Activated CD4-positive, alpha-beta T cell treated with anti-CD3 and anti-CD28 coated beads, Interleukin-2, amount 10 ng/mL, durations not matched to agents 7 days and 5 days (primary cell): ENCODE measurements at regions of chr13 and their contacts with region 1.

Region 1: DNA sequence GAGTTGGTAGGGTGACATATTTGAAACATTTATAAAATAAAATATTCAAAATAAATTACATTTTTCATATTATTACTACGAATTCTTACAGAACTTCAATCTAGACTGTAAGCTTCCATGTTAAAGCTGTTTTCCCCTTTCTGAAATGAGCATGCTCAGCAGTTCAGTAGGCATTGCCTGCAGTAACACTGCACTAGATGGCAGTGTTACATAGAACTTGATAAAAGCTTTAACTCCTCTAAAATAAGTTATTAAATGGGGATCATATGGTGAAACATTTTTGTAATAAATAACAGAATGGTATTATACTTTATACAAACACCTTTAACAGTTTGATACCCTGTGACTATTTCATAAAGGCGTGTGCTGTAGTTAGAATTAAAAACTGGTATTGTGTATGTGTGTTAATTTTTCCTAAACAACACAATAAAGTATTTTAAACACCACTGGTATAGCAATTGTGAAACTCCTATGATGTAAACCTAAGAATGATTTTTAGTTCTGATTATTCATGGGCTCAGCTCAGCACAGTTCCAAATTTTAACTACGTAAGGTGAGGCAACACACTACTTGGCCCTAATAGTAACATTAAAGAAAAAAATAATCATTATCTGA is 11.6 kb upstream of the GPR18 start:
- DNase-seq: peak; percentile 58
- H3K4me3 Mint-ChIP-seq: no peak overlapping the region
- H3K27ac Mint-ChIP-seq: peak overlapping the region; percentile 46
- H3K4me1 Mint-ChIP-seq: peaks cover 67% of the 10 kb centered on the region
- H3K27me3 Mint-ChIP-seq: no peaks in the 10 kb centered on the region

Region 2: DNA sequence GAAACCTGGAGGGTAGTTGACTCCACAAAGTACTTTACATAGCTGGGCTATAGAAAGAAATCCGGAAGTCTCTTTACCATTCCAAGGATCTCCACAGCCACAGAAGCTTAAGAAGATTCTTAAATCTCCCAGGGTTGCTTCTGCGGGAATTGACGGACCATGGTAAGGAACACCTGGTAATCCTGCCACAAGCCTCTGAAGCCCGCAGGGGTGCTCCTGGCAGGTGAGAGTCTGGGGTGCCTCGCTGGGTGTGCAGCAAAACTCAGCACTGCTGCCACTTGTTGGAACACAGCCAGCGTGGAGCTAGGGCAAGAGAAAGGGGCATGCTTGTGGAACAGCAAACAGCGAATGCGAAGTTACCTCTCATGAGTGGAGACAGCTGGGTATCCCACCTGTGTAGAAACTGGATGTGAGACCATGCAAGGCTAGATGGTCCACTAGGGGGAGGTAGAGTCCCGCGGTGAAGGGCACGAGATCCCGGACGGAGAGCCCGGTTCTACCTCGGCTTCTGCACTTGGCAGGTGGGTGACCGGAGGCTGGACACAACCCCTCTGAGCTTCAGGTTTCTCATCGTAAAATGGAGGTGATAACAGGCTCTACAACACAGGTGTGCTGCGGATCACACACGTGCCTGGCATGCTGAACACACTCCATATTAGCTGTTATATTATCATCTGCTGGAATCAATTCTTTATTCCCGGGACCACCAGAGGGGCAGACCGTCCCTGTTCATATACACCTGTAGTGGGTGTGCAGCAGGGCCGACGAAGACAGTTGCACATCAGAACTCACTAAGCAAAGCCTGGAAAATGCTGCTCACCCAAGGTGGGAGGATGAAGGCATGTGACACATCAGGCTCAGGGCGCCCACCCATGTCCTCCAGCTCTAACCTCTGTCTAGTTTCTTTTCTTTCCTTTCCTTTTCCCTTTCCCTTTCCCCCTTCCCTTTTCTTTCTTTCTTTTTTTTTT is 93.1 kb before region 1 on chr13:
- CTCF ChIA-PET with region 1: interaction called, 41 read pairs
- POLR2A ChIA-PET with region 1: no interaction called
- DNase-seq: peak; percentile 82
- H3K4me3 Mint-ChIP-seq: no peak overlapping the region
- H3K27ac Mint-ChIP-seq: no peak overlapping the region
- H3K4me1 Mint-ChIP-seq: peaks cover 40% of the 10 kb centered on the region
- H3K27me3 Mint-ChIP-seq: peaks cover 2% of the 10 kb centered on the region

Region 3: DNA sequence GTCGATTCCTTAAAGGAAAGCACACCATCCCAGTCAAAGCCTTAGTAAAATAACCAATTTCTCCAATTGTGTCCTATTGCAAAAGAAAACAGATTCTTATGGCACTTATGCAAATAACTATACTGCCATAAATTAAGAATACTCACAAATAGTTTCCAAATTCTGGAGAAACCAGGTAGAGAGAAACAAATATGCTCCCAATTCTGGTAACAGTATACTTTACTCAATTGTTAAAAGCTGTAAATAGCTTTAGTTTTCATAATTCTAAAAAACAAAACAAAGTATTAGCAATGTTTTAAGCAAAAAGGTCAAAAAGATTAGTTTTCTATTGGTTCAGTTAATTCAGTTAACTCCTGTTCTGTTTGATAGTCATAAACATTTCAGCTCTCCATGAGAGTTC is 87.3 kb before region 1 on chr13:
- CTCF ChIA-PET with region 1: interaction called, 41 read pairs
- POLR2A ChIA-PET with region 1: no interaction called
- DNase-seq: no peak
- H3K4me3 Mint-ChIP-seq: no peak overlapping the region
- H3K27ac Mint-ChIP-seq: no peak overlapping the region
- H3K4me1 Mint-ChIP-seq: peaks cover 29% of the 10 kb centered on the region
- H3K27me3 Mint-ChIP-seq: no peaks in the 10 kb centered on the region

Region 4: DNA sequence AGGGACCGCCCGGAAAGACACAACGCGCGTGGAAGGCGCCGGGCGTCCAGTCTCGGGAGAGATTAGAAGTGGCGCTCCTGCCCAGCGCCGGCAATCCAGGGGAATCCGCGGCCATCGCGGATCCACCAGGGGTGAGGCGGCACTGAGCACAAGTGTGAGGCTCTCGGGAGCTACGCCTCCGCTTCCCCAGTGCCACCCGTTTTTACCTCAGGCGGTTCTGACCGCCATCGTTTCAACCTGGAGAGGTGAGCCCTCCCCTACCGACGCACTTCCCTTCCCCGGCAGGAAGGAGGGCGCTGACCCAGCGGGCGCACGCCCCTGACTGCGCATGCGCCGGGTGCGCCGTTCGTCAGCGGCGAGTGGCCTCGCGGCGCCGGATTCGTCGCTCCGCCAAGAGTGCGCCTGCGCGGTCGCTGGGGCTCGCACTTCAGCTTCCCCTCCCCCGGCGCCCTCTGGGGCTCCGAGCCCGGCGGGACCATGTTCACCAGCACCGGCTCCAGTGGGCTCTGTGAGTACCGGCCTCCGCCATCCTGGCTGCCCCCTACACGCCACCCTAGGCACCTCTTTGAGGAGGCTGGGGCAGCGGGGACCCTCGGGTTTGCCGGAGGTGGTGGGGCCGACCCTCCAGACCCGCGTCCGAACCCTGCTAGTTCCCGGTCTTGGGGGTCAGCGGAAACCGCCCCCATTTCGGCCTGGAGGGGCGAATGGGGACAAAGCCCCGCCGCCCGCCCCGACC is 69.1 kb before region 1 on chr13 and contains the start of gene UBAC2:
- CTCF ChIA-PET with region 1: interaction called, 10 read pairs
- POLR2A ChIA-PET with region 1: no interaction called
- DNase-seq: peak; percentile 96
- H3K4me3 Mint-ChIP-seq: peak within 1 kb of the TSS; percentile 87
- H3K27ac Mint-ChIP-seq: peak within 1 kb of the TSS; percentile 92
- H3K4me1 Mint-ChIP-seq: peaks cover 66% of the 10 kb centered on the region
- H3K27me3 Mint-ChIP-seq: no peaks in the 10 kb centered on the region
- total RNA-seq, gene UBAC2: 67.8 to 70.5 TPM

Region 5: DNA sequence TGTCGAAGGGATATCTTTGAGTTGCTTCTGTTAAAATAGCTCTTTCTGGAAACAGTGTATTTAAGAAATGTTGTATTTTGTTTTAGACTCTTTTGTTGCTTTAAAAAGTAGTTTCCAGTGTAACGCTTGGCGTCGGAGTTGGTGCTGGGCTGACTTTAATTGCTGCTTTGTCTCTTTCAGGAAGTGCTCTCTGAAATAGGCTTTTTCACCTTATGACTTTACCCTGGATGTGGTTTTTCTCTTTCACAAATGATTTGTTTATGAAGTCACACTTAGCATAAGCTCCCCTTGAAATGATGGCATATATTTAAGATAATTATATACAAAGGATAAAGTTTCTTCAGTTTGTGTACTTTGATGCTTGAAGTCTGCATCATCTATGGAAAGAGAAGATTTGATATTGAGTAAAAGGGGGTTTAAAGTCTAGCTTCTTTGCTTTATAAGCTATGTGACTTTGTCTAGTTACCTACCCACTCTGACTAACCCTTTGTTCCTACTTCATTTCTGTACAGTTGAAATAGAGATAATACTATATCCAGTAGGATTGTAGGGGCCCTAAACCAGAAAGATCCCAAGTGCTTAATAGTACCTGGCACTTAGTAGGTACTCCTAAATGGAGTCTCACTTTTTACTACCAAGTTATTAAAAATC is 11.4 kb before region 1 on chr13 and contains the start of gene GPR18:
- CTCF ChIA-PET with region 1: interaction called, 10 read pairs
- POLR2A ChIA-PET with region 1: no interaction called
- DNase-seq: peak; percentile 60
- H3K4me3 Mint-ChIP-seq: peak within 1 kb of the TSS; percentile 87
- H3K27ac Mint-ChIP-seq: peak within 1 kb of the TSS; percentile 91
- H3K4me1 Mint-ChIP-seq: peaks cover 67% of the 10 kb centered on the region
- H3K27me3 Mint-ChIP-seq: no peaks in the 10 kb centered on the region
- total RNA-seq, gene GPR18: 19.7 to 25.4 TPM

Region 6: DNA sequence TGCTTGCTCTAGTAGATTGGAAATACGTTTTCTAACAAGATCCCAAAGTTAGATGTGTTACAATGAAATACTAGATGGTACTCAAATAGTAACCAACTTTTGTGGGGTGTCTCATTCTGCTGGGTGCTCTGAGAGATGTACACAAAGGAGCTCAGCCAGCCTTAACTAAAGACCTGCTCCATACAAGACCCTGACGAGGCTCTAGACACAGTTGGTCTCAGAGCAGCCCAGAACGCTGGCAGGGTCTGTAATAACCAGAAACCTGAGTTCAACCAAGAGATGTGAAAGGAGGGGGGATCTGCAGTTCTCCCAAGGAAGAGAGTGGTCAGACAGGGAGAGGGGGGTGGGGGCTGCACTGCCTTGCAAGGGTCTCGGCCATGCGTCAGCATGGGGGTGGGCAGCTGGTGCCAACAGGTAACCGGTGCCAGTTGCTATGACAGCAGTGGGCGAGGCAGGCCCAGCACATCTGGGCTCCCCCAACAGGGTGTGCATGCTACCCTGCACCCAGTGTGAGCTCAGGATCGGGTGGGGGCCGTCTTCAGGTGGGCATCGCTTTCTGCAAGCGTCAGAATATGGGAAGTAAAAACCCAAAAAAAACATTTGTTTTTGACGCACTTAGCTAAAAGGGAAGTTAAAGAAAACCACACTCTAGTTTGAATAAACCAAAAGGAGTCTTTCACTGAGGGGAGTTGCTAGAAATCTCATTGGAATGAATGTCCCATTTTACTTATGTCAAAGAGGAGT is 105.4 kb after region 1 on chr13:
- CTCF ChIA-PET with region 1: interaction called, 4 read pairs
- POLR2A ChIA-PET with region 1: interaction called, 13 read pairs
- DNase-seq: no peak
- H3K4me3 Mint-ChIP-seq: peak overlapping the region; percentile 45
- H3K27ac Mint-ChIP-seq: peak overlapping the region; percentile 83
- H3K4me1 Mint-ChIP-seq: peaks cover 90% of the 10 kb centered on the region
- H3K27me3 Mint-ChIP-seq: no peaks in the 10 kb centered on the region